WTC11 (cell line): ENCODE measurements at regions of chr1 and their contacts with region 1.

Region 1: GRCh38 chr1:168342572-168343280 is 62.0 kb downstream of the TBX19 start:
- DNase-seq: peak; percentile 84
- ATAC-seq: peak; percentile 99
- H3K4me3 Mint-ChIP-seq: peak overlapping the region; percentile 63
- H3K27ac Mint-ChIP-seq: no peak overlapping the region
- H3K4me1 Mint-ChIP-seq: peaks cover 6% of the 10 kb centered on the region
- H3K27me3 Mint-ChIP-seq: no peaks in the 10 kb centered on the region
- CTCF ChIP-seq: peak; percentile 81

Region 2: DNA sequence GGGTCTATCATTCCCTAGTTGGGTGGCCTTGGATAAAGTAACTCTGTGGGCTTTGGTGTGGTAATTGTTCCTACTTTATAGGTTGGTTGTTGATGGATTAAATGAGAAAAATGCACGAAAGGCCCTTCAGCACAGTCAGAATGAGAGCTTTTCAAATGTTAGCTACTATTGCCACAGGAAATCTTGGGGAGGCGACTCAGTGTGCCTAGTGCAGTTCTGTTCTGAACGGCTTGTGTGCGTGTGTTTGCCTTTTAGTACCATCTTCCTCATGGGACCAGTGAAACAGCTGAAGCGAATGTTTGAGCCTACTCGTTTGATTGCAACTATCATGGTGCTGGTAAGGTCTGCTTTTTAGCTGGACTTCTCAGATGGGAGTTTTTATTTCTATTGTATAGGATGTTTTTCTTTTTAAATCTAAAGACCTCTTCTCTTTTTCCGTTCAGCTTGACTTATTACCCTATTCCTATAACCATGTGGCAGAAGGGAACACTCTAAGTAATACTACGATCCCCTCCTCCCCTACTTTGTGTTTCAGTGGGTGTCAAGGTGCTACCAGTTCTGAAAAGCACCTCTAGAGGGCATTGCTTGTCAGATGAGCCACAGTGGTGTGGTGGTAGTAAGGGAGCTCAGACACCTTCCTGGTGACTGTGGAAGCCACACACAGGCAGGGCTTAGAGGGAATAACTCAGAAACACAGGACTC is 107.7 kb before region 1 on chr1:
- CTCF ChIA-PET with region 1: interaction called, 34 read pairs
- POLR2A ChIA-PET with region 1: no interaction called
- DNase-seq: peak; percentile 43
- ATAC-seq: peak; percentile 100
- H3K4me3 Mint-ChIP-seq: no peak overlapping the region
- H3K27ac Mint-ChIP-seq: no peak overlapping the region
- H3K4me1 Mint-ChIP-seq: no peaks in the 10 kb centered on the region
- H3K27me3 Mint-ChIP-seq: no peaks in the 10 kb centered on the region
- CTCF ChIP-seq: peak; percentile 68

Region 3: DNA sequence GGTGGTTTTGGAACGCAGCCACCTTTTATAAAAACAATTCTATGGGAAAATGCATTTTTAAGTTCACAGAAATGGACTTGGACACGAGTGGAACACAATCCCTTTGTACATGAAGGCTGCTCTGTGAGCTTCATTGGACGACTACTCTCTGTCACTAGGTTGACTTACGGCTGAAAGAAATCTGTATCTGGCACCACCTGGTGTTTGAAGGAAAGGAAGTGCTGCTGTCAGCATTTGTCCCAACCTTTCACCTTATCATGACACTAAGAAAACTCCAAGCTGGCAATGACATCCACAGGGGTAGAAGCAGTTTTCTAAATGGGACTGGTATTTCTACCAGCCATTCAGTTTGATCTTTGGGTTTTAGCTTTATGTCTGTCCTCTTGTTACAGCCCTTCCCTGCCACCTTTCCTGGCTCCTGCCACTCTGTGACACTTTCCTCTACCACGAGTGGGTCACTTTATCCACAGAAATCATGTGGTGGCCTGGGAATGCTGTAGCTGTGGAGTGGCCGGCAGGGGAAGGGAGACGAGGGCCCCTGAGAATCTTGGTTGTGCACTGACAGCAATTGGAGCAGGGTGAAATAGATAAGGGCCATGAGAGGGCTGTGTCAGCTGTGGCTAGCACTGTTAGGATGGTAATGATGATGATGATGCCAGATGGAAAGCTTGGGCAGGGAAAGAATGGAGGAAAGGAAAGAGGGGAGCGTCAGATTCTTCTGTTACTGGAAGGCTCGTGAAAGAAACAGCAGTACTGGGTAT is 23.2 kb after region 1 on chr1:
- CTCF ChIA-PET with region 1: interaction called, 64 read pairs
- POLR2A ChIA-PET with region 1: no interaction called
- DNase-seq: no peak
- ATAC-seq: peak; percentile 66; the same call in 1 of the 2 replicates
- H3K4me3 Mint-ChIP-seq: no peak overlapping the region
- H3K27ac Mint-ChIP-seq: no peak overlapping the region
- H3K4me1 Mint-ChIP-seq: no peaks in the 10 kb centered on the region
- H3K27me3 Mint-ChIP-seq: no peaks in the 10 kb centered on the region; the same call in 1 of the 2 replicates
- CTCF ChIP-seq: no peak

Region 4: DNA sequence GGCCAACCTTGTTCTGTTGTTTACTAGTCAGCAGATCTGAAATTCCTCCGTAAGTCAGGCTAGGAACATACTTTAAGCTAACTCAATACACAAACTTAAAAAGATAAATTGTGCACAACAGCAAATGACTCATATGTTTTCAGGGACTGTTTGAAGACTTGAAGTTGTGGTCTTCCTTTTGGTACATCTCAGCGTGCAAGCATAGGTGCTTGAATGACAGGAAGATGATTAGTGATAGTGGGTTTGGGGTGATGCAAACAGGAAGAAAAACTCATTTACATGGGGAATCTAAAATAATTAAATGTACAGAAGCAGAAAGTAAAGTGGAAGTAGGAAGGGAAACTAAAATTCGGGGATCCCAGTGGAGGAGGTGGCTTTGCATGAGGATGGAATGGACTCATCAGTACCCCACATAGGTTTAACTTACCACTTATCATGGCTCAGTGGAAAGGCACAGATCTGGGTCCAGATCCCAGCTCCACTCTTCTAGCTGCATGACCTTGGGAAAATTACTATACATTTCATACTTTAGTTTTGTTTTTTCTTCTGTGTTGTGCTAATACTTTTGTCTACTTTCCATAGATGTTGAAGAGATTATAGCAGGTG is 78.8 kb after region 1 on chr1:
- CTCF ChIA-PET with region 1: interaction called, 12 read pairs
- POLR2A ChIA-PET with region 1: no interaction called
- DNase-seq: no peak
- ATAC-seq: no peak
- H3K4me3 Mint-ChIP-seq: no peak overlapping the region
- H3K27ac Mint-ChIP-seq: no peak overlapping the region
- H3K4me1 Mint-ChIP-seq: no peaks in the 10 kb centered on the region
- H3K27me3 Mint-ChIP-seq: no peaks in the 10 kb centered on the region; the same call in 1 of the 2 replicates
- CTCF ChIP-seq: no peak

Region 5: GRCh38 chr1:168439456-168440375 is 97.0 kb after region 1 on chr1:
- CTCF ChIA-PET with region 1: interaction called, 27 read pairs
- POLR2A ChIA-PET with region 1: interaction called, 3 read pairs
- DNase-seq: peak; percentile 85
- ATAC-seq: peak; percentile 98
- H3K4me3 Mint-ChIP-seq: peak overlapping the region; percentile 37; the same call in 1 of the 2 replicates
- H3K27ac Mint-ChIP-seq: no peak overlapping the region
- H3K4me1 Mint-ChIP-seq: peaks cover 10% of the 10 kb centered on the region
- H3K27me3 Mint-ChIP-seq: no peaks in the 10 kb centered on the region
- CTCF ChIP-seq: peak; percentile 77